H1 (cell line): ENCODE measurements at regions of chr9 and their contacts with region 1.

Region 1: GRCh38 chr9:38017149-38017884 is 51.7 kb downstream of the SHB start:
- DNase-seq: peak; percentile 80 to 97
- H3K4me3 ChIP-seq: peak overlapping the region in 2 of 4 experiments; percentile 17 to 37; a peak in 2 of 8 replicates
- H3K27ac ChIP-seq: peak overlapping the region; percentile 83
- H3K4me1 ChIP-seq: peaks cover 31 to 60% (median 39%) of the 10 kb centered on the region in 4 experiments
- H3K27me3 ChIP-seq: no peaks in the 10 kb centered on the region
- CTCF ChIP-seq: peak; percentile 75 to 82 (median 80)
- EP300 ChIP-seq: peak; percentile 26 to 97
- POLR2A ChIP-seq: no peak; a peak in 1 of 3 replicates
- RAD21 ChIP-seq: peak; percentile 80 to 90

Region 2: GRCh38 chr9:37913480-37914153 is 103.7 kb before region 1 on chr9:
- CTCF ChIA-PET with region 1: interaction called, 27 read pairs
- POLR2A ChIA-PET with region 1: interaction called, 3 read pairs
- DNase-seq: peak; percentile 82 to 99
- H3K4me3 ChIP-seq: no peak overlapping the region
- H3K27ac ChIP-seq: no peak overlapping the region
- H3K4me1 ChIP-seq: no peaks in the 10 kb centered on the region
- H3K27me3 ChIP-seq: no peaks in the 10 kb centered on the region
- CTCF ChIP-seq: peak; percentile 78 to 99 (median 98)
- EP300 ChIP-seq: no peak
- POLR2A ChIP-seq: no peak
- RAD21 ChIP-seq: peak; percentile 100

Region 3: GRCh38 chr9:37958154-37958553 is 59.2 kb before region 1 on chr9:
- CTCF ChIA-PET with region 1: no interaction called
- POLR2A ChIA-PET with region 1: no interaction called
- DNase-seq: no peak
- H3K4me3 ChIP-seq: no peak overlapping the region
- H3K27ac ChIP-seq: no peak overlapping the region
- H3K4me1 ChIP-seq: no peaks in the 10 kb centered on the region
- H3K27me3 ChIP-seq: no peaks in the 10 kb centered on the region
- CTCF ChIP-seq: no peak
- EP300 ChIP-seq: no peak
- POLR2A ChIP-seq: no peak
- RAD21 ChIP-seq: no peak

Region 4: GRCh38 chr9:37994639-37995347 is 22.5 kb before region 1 on chr9:
- CTCF ChIA-PET with region 1: interaction called, 20 read pairs
- POLR2A ChIA-PET with region 1: interaction called, 24 read pairs
- DNase-seq: no peak
- H3K4me3 ChIP-seq: no peak overlapping the region
- H3K27ac ChIP-seq: no peak overlapping the region
- H3K4me1 ChIP-seq: peaks cover 0 to 15% (median 3%) of the 10 kb centered on the region in 4 experiments; a peak in 6 of 7 replicates
- H3K27me3 ChIP-seq: no peaks in the 10 kb centered on the region
- CTCF ChIP-seq: no peak
- EP300 ChIP-seq: no peak
- POLR2A ChIP-seq: no peak
- RAD21 ChIP-seq: no peak

Region 5: GRCh38 chr9:38047301-38048251 is 30.3 kb after region 1 on chr9:
- CTCF ChIA-PET with region 1: interaction called, 10 read pairs
- POLR2A ChIA-PET with region 1: interaction called, 11 read pairs
- DNase-seq: peak; percentile 63 to 69
- H3K4me3 ChIP-seq: peak overlapping the region in 1 of 4 experiments; percentile 13; a peak in 1 of 8 replicates
- H3K27ac ChIP-seq: peak overlapping the region; percentile 59; the same call in 1 of the 2 replicates
- H3K4me1 ChIP-seq: peaks cover 8 to 23% (median 18%) of the 10 kb centered on the region in 4 experiments
- H3K27me3 ChIP-seq: no peaks in the 10 kb centered on the region
- CTCF ChIP-seq: no peak
- EP300 ChIP-seq: no peak
- POLR2A ChIP-seq: peak in 1 of 2 experiments; percentile 45; a peak in 1 of 3 replicates
- RAD21 ChIP-seq: no peak

Region 6: GRCh38 chr9:38066914-38067610 is 49.7 kb after region 1 on chr9:
- CTCF ChIA-PET with region 1: interaction called, 22 read pairs
- POLR2A ChIA-PET with region 1: interaction called, 9 read pairs
- DNase-seq: no peak
- H3K4me3 ChIP-seq: peak overlapping the region; percentile 45 to 86 (median 56)
- H3K27ac ChIP-seq: no peak overlapping the region
- H3K4me1 ChIP-seq: peaks cover 3 to 44% (median 28%) of the 10 kb centered on the region in 4 experiments
- H3K27me3 ChIP-seq: peaks cover 0 to 16% (median 12%) of the 10 kb centered on the region in 4 experiments; a peak in 5 of 7 replicates
- CTCF ChIP-seq: no peak
- EP300 ChIP-seq: no peak
- POLR2A ChIP-seq: no peak
- RAD21 ChIP-seq: no peak; a peak in 1 of 4 replicates

Region 7: DNA sequence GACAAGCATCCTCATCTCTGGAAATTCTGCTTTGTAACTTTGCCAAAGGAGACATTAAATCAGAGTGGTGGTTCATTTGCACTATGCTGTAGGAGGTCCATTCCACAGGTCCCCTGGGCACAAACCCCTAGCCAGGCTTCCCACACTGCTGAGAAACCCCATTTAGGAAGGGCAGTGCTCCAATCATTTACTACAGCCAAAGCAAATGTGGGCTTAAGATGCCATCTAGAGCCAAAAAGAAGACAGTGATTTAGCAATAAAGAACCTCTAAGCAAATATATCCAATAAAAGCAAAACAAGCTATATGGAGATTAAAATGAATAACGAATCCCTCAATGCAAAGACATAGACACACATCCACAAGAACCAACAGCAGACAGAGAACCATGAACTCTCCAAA is 246.2 kb after region 1 on chr9:
- CTCF ChIA-PET with region 1: interaction called, 12 read pairs
- POLR2A ChIA-PET with region 1: no interaction called
- DNase-seq: no peak
- H3K4me3 ChIP-seq: no peak overlapping the region
- H3K27ac ChIP-seq: no peak overlapping the region
- H3K4me1 ChIP-seq: no peaks in the 10 kb centered on the region
- H3K27me3 ChIP-seq: peaks cover 0 to 3% (median 0%) of the 10 kb centered on the region in 4 experiments; a peak in 2 of 7 replicates
- CTCF ChIP-seq: peak in 2 of 3 experiments; percentile 43 to 57; a peak in 3 of 4 replicates
- EP300 ChIP-seq: no peak
- POLR2A ChIP-seq: no peak
- RAD21 ChIP-seq: peak; percentile 86 to 87

Region 8: DNA sequence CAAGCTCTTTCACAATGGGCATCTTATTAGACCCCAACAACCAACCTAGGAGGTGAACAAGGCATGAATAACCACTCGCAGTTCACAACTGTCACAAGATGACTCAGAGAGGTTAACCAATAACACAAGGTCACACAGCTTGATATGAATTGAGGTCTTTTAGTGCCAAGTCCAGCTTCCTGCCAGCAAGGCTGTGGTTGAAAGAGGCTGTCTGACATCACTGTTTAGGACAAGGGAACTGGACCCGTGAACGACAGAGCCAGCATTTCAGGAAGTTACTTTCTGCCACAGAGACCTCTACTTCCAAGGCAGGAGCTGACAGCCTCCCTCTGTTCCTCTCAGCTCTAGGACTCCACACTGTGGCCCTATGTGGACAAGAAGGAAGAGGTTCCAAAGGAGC is 321.8 kb after region 1 on chr9:
- CTCF ChIA-PET with region 1: no interaction called
- POLR2A ChIA-PET with region 1: no interaction called
- DNase-seq: no peak
- H3K4me3 ChIP-seq: no peak overlapping the region
- H3K27ac ChIP-seq: no peak overlapping the region
- H3K4me1 ChIP-seq: peaks cover 0 to 4% (median 1%) of the 10 kb centered on the region in 4 experiments; a peak in 3 of 7 replicates
- H3K27me3 ChIP-seq: peaks cover 0 to 2% (median 0%) of the 10 kb centered on the region in 4 experiments; a peak in 2 of 7 replicates
- CTCF ChIP-seq: no peak
- EP300 ChIP-seq: no peak
- POLR2A ChIP-seq: no peak
- RAD21 ChIP-seq: no peak